A673 (cell line): ENCODE measurements at regions of chr4 and their contacts with region 1.

Region 1: DNA sequence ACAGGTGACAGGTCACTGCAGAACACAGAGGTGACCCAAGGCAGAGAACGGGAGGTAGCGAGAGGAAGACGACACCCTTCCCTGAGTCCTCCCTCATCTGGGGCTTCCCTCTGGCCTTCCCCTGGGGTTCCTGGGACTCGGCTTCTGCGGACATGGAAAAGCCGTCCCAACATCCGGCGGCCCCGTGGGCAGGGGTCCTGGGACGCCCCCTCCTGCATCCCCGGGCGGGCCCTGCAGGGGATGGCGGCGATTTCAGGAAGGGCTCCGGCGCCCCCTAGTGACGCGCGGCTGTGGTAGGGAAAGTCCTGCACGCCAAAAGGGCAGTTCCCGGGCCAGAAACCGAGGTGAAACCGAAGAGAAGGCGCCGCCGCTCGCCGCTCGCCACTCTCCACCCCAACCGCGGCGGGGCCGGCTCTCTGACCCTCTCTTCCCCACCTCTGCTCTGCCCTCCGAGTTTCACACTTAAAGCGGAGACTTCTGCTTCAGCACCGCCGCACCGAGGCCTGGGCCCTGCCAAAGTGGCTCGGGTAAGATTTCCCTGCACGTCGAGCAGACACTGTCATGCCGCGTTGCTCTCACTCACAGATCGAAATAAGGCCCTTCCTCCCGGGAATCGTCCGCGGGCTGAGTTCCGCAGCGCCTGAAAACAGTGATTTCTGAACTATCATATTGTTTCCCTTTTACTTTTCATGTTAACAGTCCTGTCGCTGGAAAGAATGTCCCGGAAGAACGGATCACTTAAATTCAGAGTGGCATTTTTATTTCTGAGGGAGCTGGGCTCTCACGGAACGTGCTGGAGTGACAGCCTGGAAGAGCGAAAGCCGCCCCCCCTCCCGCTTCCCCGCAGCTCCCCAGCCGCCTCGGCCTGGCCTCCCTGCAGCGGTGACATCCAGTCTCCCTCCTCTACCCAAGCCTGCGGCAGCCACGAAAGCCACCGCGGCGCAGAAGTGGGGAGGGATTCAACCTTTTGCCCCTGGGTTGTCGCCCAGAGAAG is 110.6 kb downstream of the DCTD start:
- DNase-seq: peak; percentile 73
- H3K4me3 ChIP-seq: peak overlapping the region; percentile 18
- H3K27ac ChIP-seq: no peak overlapping the region
- H3K4me1 ChIP-seq: no peaks in the 10 kb centered on the region
- H3K27me3 ChIP-seq: no peaks in the 10 kb centered on the region
- CTCF ChIP-seq: peak; percentile 93

Region 2: DNA sequence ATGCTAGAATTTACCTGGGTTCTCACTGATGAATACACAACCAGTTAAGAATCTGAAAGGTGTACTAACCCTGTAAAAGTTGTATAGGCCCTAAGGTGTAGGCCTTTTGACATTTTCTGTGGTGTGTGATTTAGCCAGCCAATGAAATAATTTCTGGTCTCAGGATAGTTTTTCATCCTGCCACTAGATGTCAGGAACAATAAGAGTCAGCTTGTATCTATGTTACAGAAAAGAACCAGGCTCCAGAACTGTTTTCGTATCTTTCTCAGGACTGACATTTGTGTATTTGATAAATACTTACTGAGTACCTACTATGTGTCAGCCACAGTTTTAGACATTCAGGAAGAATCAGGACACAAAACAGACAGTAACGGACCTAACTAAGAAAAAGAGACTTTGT is 1237.0 kb before region 1 on chr4:
- CTCF ChIA-PET with region 1: no interaction called
- POLR2A ChIA-PET with region 1: no interaction called
- intact Hi-C with region 1: loop called (anchors 10 kb)
- DNase-seq: peak; percentile 51
- H3K4me3 ChIP-seq: no peak overlapping the region
- H3K27ac ChIP-seq: no peak overlapping the region
- H3K4me1 ChIP-seq: no peaks in the 10 kb centered on the region
- H3K27me3 ChIP-seq: peaks cover 29% of the 10 kb centered on the region
- CTCF ChIP-seq: peak; percentile 67

Region 3: DNA sequence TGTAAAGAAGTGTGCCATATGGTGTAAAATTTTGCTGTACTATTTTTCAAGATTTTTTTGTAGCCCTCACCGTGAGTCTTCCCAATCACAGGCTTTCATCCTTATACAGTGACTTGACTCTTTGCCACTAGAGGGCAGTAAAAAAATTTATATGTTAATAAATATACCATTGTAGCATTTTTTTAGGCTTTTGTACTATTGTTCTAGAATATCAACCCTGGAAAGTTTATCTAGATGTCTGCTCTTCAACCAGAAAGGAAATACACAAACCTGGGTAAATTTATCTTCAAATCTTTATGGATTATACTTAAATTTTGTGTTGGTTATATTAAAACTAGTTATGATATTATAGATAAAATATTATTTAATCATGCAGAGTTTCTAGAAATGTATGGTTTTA is 328.1 kb before region 1 on chr4:
- CTCF ChIA-PET with region 1: no interaction called
- POLR2A ChIA-PET with region 1: no interaction called
- intact Hi-C with region 1: loop called (anchors 2 kb)
- DNase-seq: peak; percentile 75
- H3K4me3 ChIP-seq: no peak overlapping the region
- H3K27ac ChIP-seq: no peak overlapping the region
- H3K4me1 ChIP-seq: no peaks in the 10 kb centered on the region
- H3K27me3 ChIP-seq: no peaks in the 10 kb centered on the region
- CTCF ChIP-seq: peak; percentile 74

Region 4: GRCh38 chr4:182925298-182925738 is 118.8 kb after region 1 on chr4:
- CTCF ChIA-PET with region 1: no interaction called
- POLR2A ChIA-PET with region 1: interaction called, 5 read pairs
- intact Hi-C with region 1: loop called (anchors 2 kb)
- DNase-seq: peak; percentile 91
- H3K4me3 ChIP-seq: no peak overlapping the region
- H3K27ac ChIP-seq: no peak overlapping the region
- H3K4me1 ChIP-seq: no peaks in the 10 kb centered on the region
- H3K27me3 ChIP-seq: no peaks in the 10 kb centered on the region
- CTCF ChIP-seq: peak; percentile 92

Region 5: DNA sequence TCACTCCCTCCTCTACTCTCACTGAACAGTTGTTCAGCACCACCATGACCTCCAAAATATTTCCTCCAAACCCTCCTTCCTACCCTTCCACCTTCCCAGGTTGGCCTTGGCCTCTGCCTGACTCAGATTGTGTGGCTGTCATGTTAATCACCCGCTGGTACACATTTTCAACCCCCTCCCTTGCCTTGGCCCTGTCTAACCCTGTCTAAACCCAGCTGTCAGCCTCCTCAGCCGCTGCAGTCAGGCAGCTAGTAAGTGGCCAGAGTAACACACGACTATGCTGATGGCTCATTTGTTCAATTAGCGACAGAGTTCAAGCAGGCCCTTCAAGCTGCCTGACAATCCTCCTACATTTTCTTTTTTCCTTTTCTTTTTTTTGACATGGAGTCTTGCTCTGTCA is 716.3 kb after region 1 on chr4:
- CTCF ChIA-PET with region 1: no interaction called
- POLR2A ChIA-PET with region 1: no interaction called
- intact Hi-C with region 1: no loop called
- DNase-seq: no peak
- H3K4me3 ChIP-seq: no peak overlapping the region
- H3K27ac ChIP-seq: no peak overlapping the region
- H3K4me1 ChIP-seq: no peaks in the 10 kb centered on the region
- H3K27me3 ChIP-seq: no peaks in the 10 kb centered on the region
- CTCF ChIP-seq: no peak